SK-N-SH (cell line): ENCODE measurements at regions of chrX and their contacts with region 1.

Region 1: DNA sequence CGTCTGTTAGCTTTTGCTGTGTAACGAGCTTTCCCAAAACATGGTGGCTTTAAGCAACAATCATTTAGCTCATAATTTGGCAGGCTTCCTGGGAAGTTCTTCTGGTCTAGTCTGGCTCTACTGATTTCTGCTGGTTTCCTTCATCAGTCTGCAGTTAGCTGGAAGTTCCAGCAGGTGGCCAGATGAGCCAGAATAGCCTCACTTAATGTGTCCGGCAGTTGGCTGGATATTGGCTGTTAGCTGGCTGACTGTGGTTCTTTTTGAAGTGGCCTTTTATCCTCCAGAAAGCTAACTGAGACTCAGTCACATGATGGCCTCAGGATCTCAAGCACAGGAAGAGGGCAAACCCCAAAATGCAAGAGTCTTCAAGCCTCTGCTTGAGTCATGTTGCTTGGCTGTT is 34.9 kb downstream of the FTHL17 start:
- DNase-seq: peak; percentile 34
- H3K4me3 ChIP-seq: no peak overlapping the region
- H3K27ac ChIP-seq: no peak overlapping the region
- H3K4me1 ChIP-seq: no peaks in the 10 kb centered on the region
- H3K27me3 ChIP-seq: no peaks in the 10 kb centered on the region
- CTCF ChIP-seq: peak; percentile 70
- EP300 ChIP-seq: no peak
- RAD21 ChIP-seq: peak; percentile 71

Region 2: DNA sequence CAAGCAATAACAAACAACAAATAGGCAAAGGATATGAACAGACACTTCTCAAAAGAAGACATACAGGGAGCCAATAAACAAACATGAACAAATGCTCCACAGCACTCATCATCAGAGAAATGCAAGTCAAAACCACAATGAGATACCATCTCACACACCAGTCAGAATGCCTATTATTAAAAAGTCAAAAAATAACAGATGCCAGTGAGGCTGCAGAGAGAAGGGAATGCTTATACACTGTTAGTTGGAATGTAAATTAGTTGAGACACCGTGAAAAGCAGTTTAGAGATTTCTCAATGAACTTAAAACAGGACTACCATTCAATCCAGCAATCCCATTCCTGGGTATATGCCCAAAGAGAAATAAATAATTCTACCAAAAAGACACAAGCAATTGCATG is 951.3 kb before region 1 on chrX:
- CTCF ChIA-PET with region 1: no interaction called
- POLR2A ChIA-PET with region 1: no interaction called
- DNase-seq: no peak
- H3K4me3 ChIP-seq: no peak overlapping the region
- H3K27ac ChIP-seq: no peak overlapping the region
- H3K4me1 ChIP-seq: no peaks in the 10 kb centered on the region
- H3K27me3 ChIP-seq: no peaks in the 10 kb centered on the region
- CTCF ChIP-seq: no peak
- EP300 ChIP-seq: 0 out of 4 replicates have a peak, but pooled peaks of 1 of the 2 experiments have one; percentile 22
- RAD21 ChIP-seq: no peak

Region 3: DNA sequence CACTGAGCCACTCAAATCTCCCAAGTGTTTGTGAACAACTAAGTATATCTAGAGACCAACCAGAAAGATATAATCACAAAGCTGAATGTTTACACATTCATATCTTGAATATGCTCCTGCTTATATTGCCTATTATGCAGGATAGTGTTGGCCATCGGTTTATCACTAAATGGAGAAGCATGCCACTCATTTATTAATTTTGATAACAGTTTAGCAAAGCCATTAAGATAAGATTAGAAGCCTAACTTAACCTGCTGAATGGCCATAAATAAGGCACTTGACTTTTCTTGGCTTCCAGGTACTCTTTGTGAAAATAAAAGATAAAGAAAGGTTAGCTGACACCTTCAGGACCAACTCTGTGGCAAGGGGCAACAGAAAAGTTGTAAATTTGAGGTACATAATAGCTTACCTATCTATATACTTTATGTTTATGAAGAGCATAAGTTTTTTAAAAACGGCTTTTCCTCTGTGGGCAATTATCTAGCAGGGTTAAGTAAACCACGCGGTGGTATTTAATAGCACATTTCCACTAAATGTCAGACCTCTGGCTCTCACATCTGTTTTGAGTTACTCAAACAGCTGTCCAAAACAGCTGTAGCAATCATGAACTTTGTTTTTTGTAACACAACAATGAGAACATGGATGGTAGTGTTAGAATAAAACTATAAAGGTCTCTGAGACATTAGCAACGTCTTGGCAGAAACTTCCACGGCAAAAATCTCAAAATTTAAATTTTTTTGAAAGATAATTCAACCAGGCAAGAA is 93.7 kb after region 1 on chrX:
- CTCF ChIA-PET with region 1: interaction called, 11 read pairs
- POLR2A ChIA-PET with region 1: no interaction called
- DNase-seq: peak; percentile 10
- H3K4me3 ChIP-seq: no peak overlapping the region
- H3K27ac ChIP-seq: no peak overlapping the region
- H3K4me1 ChIP-seq: no peaks in the 10 kb centered on the region; a peak in 1 of 4 replicates
- H3K27me3 ChIP-seq: no peaks in the 10 kb centered on the region
- CTCF ChIP-seq: no peak
- EP300 ChIP-seq: peak in 1 of 2 experiments; percentile 64; a peak in 1 of 4 replicates
- RAD21 ChIP-seq: no peak

Region 4: GRCh38 chrX:31213941-31214340 is 177.0 kb after region 1 on chrX:
- CTCF ChIA-PET with region 1: interaction called, 13 read pairs
- POLR2A ChIA-PET with region 1: no interaction called
- DNase-seq: peak; percentile 22
- H3K4me3 ChIP-seq: no peak overlapping the region
- H3K27ac ChIP-seq: no peak overlapping the region
- H3K4me1 ChIP-seq: no peaks in the 10 kb centered on the region
- H3K27me3 ChIP-seq: no peaks in the 10 kb centered on the region
- CTCF ChIP-seq: peak; percentile 62
- EP300 ChIP-seq: no peak
- RAD21 ChIP-seq: peak; percentile 67

Region 5: GRCh38 chrX:31423609-31424189 is 386.8 kb after region 1 on chrX:
- CTCF ChIA-PET with region 1: interaction called, 11 read pairs
- POLR2A ChIA-PET with region 1: no interaction called
- DNase-seq: peak; percentile 43
- H3K4me3 ChIP-seq: no peak overlapping the region
- H3K27ac ChIP-seq: peak overlapping the region in 1 of 2 experiments; percentile 55; a peak in 2 of 4 replicates
- H3K4me1 ChIP-seq: peaks cover 0 to 7% of the 10 kb centered on the region in 2 experiments; a peak in 2 of 4 replicates
- H3K27me3 ChIP-seq: no peaks in the 10 kb centered on the region
- CTCF ChIP-seq: peak; percentile 64
- EP300 ChIP-seq: 0 out of 4 replicates have a peak, but pooled peaks of 1 of the 2 experiments have one; percentile 18
- RAD21 ChIP-seq: peak; percentile 61